HepG2 (cell line): ENCODE measurements at regions of chr10 and their contacts with region 1.

Region 1: GRCh38 chr10:104231784-104232612 is at the start of gene CFAP43:
- DNase-seq: peak; percentile 93
- ATAC-seq: peak; percentile 100
- H3K4me3 ChIP-seq: peak within 1 kb of the TSS; percentile 79 to 93 (median 86)
- H3K27ac ChIP-seq: peak within 1 kb of the TSS; percentile 82
- H3K4me1 ChIP-seq: peaks cover 21% of the 10 kb centered on the region
- H3K27me3 ChIP-seq: no peaks in the 10 kb centered on the region; a peak in 1 of 5 replicates
- CTCF ChIP-seq: no peak; the same call in 1 of the 2 replicates
- EP300 ChIP-seq: no peak
- POLR2A ChIP-seq: peak; percentile 49 to 61; a peak in 3 of 4 replicates
- RAD21 ChIP-seq: peak; percentile 30; the same call in 1 of the 2 replicates
- total RNA-seq, gene CFAP43: 0.24 and 0.46 TPM in 2 replicates

Region 2: DNA sequence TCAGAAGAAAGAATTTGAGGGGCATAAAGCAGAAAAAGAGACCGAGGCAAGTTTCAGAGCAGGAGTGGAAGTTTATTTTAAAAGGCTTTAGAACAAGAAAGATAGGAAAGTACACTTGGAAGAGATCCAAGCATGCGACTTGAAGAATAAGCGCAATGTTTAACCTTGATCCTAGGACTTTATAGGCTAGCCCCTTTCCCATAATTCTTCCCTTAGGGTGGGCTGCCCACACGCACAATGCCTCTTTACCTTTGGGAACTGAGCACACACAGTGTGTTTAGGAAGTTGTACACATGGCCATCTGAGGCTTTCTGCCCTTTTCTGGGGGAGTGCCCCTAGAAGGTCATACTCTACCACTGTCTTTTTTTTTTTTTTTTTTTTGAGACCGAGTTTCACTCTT is 11.5 kb after region 1 on chr10:
- CTCF ChIA-PET with region 1: no interaction called
- POLR2A ChIA-PET with region 1: interaction called, 3 read pairs
- in situ Hi-C with region 1: no loop called
- intact Hi-C with region 1: loop called (anchors 1 kb)
- DNase-seq: peak; percentile 33
- ATAC-seq: peak; percentile 66
- H3K4me3 ChIP-seq: peak overlapping the region in 1 of 3 experiments; percentile 17; a peak in 1 of 6 replicates
- H3K27ac ChIP-seq: peak overlapping the region; percentile 57
- H3K4me1 ChIP-seq: peaks cover 19% of the 10 kb centered on the region
- H3K27me3 ChIP-seq: no peaks in the 10 kb centered on the region
- CTCF ChIP-seq: no peak
- EP300 ChIP-seq: no peak
- POLR2A ChIP-seq: no peak
- RAD21 ChIP-seq: no peak

Region 3: GRCh38 chr10:104308439-104308903 is 76.5 kb after region 1 on chr10:
- CTCF ChIA-PET with region 1: no interaction called
- POLR2A ChIA-PET with region 1: no interaction called
- in situ Hi-C with region 1: no loop called
- intact Hi-C with region 1: no loop called
- DNase-seq: no peak
- ATAC-seq: no peak
- H3K4me3 ChIP-seq: no peak overlapping the region
- H3K27ac ChIP-seq: no peak overlapping the region
- H3K4me1 ChIP-seq: peaks cover 16% of the 10 kb centered on the region
- H3K27me3 ChIP-seq: no peaks in the 10 kb centered on the region; a peak in 1 of 5 replicates
- CTCF ChIP-seq: no peak
- EP300 ChIP-seq: no peak
- POLR2A ChIP-seq: no peak
- RAD21 ChIP-seq: no peak